Posterior cingulate gyrus (tissue), 11 donors: ENCODE measurements at regions of chr12 and their contacts with region 1.

Region 1: DNA sequence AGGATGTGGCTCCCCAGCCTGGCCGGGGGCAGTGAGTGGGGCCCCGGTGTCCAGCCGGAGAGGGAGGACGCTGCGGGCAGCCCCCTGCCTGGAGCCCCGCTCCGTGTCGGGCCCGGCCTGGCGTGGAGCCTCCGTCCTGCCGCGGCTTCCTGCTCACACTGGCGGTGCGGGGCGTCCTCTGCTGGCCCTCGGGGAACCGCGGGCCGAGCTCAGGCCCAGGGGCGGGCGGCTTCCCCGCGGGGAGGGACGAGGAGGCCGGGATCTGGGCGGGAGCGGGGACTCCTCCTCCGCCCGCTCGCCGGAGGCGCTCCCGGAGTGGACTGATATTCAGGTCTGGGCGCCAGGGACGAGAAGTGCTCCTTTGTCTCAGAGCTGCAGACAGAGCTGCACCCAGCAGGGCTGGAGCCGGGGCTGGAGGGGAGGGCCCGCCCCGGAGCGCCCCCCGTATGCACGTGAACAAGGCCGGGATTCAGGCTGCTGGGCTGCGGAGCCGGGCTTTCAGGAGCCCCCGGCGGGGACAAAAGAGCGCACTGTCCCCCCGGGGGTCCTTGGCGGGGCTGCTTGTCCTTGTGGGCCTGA is 2.2 kb downstream of the MMP17 start:
- DNase-seq: peak; percentile 74 to 98 (median 86)

Region 2: GRCh38 chr12:130916251-130916911 is 914.0 kb before region 1 on chr12:
- intact Hi-C with region 1: loop called (anchors 5 kb)
- DNase-seq: peak; percentile 55 to 95 (median 70)

Region 3: GRCh38 chr12:131104463-131105350 is 725.7 kb before region 1 on chr12:
- intact Hi-C with region 1: loop called (anchors 2 kb)
- DNase-seq: peak; percentile 84 to 98 (median 94)

Region 4: GRCh38 chr12:131608740-131609690 is 221.4 kb before region 1 on chr12:
- intact Hi-C with region 1: loop called (anchors 1 kb)
- DNase-seq: peak; percentile 79 to 98 (median 88)

Region 5: DNA sequence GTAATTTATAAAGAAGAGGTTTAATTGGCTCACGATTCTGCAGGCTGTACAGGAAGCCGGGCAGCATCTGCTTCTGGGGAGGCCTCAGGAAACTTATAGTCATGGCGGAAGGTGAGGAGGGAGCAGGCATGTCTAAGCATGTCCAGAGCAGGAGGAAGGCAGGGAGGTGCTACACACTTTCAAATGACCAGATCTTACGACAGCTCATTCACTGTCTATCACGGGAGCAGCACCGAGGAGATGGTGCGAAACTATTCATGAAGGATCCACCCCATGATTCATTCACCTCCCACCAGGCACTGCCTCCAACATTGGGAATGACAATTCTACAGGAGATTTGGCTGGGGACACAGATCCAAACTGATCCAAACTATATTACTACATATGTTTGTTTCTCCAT is 109.5 kb before region 1 on chr12:
- intact Hi-C with region 1: loop called (anchors 10 kb)
- DNase-seq: no peak

Region 6: DNA sequence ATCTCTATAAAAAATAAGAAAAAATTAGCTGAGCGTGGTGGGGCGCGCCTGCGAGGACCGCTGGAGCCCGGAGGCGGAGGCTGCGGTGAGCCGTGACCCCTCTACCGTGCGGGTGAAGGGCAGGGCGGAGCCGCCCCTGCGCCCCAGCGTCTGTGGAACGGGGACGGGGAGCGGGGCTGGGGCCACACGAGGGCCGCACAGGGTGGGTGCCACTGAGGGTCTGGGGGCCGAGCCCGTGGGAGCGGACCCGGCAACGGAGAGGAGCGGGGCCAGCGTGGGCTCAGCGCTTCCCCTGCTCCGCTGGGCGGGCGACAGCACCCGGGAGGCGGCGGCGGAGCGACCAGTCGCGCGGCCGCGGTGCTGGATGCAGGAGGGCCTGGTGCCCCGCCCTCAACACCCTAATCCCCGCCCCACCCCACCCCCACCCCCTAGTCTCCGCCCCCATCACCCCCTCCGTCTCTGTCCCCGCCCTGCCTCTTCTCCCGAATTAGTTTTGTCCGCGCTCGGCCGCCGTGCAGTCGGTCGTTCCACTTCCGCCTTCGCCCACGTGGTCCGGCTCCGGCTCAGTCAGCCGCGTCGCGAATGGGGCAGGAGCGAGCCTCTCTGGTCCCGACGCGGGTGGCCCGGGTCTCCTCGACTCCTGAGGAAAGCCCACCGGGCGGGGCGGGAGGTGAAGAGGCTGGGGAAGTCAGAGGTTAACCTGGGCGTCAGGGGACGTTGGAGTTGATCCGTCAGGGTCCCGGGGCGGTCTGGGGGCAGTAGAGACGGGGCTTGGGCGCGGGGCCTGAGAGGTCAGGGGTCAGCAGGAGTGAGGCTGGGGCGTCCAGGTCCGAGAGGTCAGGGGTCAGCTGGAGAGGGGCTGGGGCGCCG is 98.5 kb after region 1 on chr12 and contains the start of gene PUS1:
- intact Hi-C with region 1: loop called (anchors 10 kb)
- DNase-seq: peak; percentile 92 to 99 (median 96)